ENCODE measurements at regions of chr9 and their contacts with region 1.

Region 1: DNA sequence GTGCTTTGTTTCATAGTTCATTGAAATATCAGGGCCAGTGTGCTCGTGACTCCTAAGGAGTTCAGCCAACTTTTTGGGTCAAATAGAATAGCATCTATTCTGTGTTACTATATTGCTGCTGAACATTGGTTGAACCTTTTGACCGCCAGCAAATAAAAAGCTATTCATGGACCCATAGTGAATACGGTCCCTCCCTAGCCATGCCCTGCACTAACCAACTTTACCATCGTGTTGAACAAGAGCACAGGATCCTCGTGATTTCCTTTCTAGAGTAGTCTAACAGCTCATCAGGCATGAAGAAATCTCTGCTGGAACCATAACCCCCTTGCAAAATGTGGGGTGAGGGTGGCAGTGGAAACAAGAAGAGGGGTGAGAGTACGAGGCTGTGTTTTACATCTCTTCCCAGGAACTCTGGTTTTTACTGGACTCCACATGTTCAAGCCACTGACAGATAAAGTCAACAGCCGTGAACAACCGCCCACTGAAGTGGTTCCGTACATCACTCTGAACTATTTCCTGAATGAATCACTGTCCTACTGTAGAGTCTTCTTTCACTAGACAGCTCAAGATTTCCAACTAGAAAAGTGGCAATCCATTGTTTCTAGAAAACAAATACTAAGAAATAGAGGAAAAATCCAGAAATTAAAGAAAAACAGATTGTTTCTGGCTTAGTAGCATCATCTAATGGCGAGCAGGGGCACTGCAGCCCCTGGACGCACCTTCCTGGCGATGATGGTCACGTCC is 70.1 kb upstream of the SPATA31E1 start:
- DNase-seq: no peak
- H3K4me3 Mint-ChIP-seq: no peak overlapping the region
- H3K27ac Mint-ChIP-seq: peak overlapping the region; percentile 12
- H3K4me1 Mint-ChIP-seq: peaks cover 25% of the 10 kb centered on the region
- H3K27me3 Mint-ChIP-seq: peaks cover 13% of the 10 kb centered on the region

Region 2: GRCh38 chr9:87336914-87337333 is 475.6 kb before region 1 on chr9:
- intact Hi-C with region 1: loop called (anchors 10 kb)
- DNase-seq: no peak
- H3K4me3 Mint-ChIP-seq: no peak overlapping the region
- H3K27ac Mint-ChIP-seq: no peak overlapping the region
- H3K4me1 Mint-ChIP-seq: peaks cover 7% of the 10 kb centered on the region
- H3K27me3 Mint-ChIP-seq: peaks cover 27% of the 10 kb centered on the region

Region 3: DNA sequence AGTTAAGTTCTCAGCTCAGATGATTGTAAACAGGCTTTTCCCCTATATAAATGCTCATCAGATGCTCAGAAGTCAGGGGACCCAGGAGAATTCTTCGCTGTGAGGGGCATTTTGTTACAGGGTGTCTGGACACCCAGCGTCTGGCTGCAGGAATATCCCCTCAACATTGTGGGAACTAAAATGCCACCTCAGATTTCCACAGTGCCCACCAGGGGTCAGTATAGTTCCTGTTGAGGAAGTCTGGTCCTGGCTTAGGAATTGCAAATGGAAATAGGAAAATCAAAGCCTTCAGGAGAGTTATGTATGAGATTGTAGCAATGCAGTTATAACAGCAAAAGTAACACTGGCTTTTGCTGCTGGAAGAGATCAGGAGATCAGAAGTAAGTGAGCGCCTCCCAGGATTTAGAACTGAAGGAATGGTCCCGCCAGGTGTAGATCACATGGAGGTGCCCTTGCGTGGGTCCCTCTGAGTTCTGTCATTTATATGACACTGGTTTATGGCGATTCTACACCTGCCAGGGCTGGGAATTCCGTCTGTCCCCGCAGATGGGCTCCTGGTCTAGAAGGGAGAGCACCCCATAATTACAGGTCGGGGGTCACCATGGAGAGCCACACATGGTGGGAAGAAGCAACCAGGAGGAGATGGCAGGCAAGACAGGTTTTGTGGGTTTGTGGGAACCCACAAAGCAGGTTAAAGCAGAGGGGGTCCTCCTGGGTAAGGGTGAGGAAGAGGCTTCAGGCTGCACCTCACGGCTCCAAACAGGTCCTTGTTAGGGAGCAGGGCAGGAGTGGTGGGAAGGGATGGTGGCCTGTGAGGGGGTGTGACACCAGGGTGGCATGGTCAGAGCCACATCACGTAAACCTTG is 133.7 kb before region 1 on chr9:
- intact Hi-C with region 1: loop called (anchors 1 kb)
- DNase-seq: no peak
- H3K4me3 Mint-ChIP-seq: no peak overlapping the region
- H3K27ac Mint-ChIP-seq: no peak overlapping the region
- H3K4me1 Mint-ChIP-seq: no peaks in the 10 kb centered on the region
- H3K27me3 Mint-ChIP-seq: peaks cover 3% of the 10 kb centered on the region

Region 4: DNA sequence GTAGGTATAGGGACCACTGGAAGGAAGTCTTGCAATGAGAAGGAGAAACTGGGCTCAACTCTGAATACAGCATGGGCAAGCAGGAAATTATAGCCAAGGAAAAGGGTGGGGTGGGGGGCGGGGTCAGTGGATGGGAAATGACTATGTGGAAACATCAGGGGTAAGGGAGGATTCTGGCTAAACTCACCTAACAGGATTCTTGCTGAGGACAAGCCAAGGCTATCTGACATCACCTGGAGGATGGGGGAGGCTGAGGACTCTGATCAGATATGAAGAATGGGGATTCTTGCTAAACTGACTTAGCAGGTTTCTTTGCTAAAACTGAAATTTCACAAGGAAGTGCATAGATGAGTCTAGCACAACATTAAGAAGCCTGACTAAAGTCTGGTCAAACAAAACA is 45.8 kb before region 1 on chr9:
- intact Hi-C with region 1: loop called (anchors 10 kb)
- DNase-seq: no peak
- H3K4me3 Mint-ChIP-seq: no peak overlapping the region
- H3K27ac Mint-ChIP-seq: no peak overlapping the region
- H3K4me1 Mint-ChIP-seq: no peaks in the 10 kb centered on the region
- H3K27me3 Mint-ChIP-seq: peaks cover 5% of the 10 kb centered on the region

Region 5: DNA sequence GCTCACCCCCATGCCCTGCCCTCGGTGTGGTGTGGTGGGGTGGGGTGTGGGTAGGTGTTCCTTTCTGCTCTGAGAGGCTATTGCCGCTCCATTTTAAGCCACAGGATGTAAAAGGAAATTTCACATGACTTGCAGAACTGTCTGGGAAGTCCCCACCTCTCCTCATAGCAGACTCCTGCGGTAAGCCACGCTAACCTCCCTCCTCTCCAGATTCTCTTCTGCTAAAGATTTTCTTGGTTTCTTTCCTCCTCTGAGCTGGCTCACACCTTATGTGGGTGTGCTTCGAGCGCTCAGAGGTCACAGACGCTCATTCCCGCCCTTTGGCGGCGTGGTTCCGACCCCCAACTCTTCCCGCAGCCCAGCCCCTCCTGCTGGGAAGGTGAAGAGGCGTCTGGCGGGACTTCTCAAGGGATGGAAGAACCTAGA is 194.7 kb after region 1 on chr9:
- intact Hi-C with region 1: loop called (anchors 10 kb)
- DNase-seq: peak; percentile 39
- H3K4me3 Mint-ChIP-seq: no peak overlapping the region
- H3K27ac Mint-ChIP-seq: no peak overlapping the region
- H3K4me1 Mint-ChIP-seq: peaks cover 10% of the 10 kb centered on the region
- H3K27me3 Mint-ChIP-seq: peaks cover 19% of the 10 kb centered on the region

Measured in activated T-helper 1 cell treated with anti-CD3 and anti-CD28 coated beads, Interleukin-12 subunit alpha, Interleukin-12 subunit beta, Interleukin-2, Interleukin-4 antibody, amounts not matched to agents 30 ng/mL and 10 ng/mL and 1 ng/mL, durations not matched to agents 14 hours and 24 hours and 36 hours (primary cell).